ENCODE measurements at regions of chr3 and their contacts with region 1.

Region 1: GRCh38 chr3:18444595-18445400 is 19.7 kb upstream of the SATB1 start:
- DNase-seq: peak; percentile 94
- H3K4me3 ChIP-seq: peak overlapping the region; percentile 39 to 61
- H3K27ac ChIP-seq: no peak overlapping the region
- H3K4me1 ChIP-seq: peaks cover 0 to 17% of the 10 kb centered on the region in 2 experiments; a peak in 2 of 4 replicates
- H3K27me3 ChIP-seq: peaks cover 28% of the 10 kb centered on the region; the same call in 1 of the 2 replicates
- CTCF ChIP-seq: no peak
- EP300 ChIP-seq: no peak
- RAD21 ChIP-seq: peak; percentile 23; the same call in 1 of the 2 replicates

Region 2: GRCh38 chr3:18431266-18431665 is 13.5 kb before region 1 on chr3:
- CTCF ChIA-PET with region 1: interaction called, 13 read pairs
- POLR2A ChIA-PET with region 1: no interaction called
- DNase-seq: no peak
- H3K4me3 ChIP-seq: no peak overlapping the region
- H3K27ac ChIP-seq: no peak overlapping the region
- H3K4me1 ChIP-seq: peaks cover 0 to 2% of the 10 kb centered on the region in 2 experiments; a peak in 1 of 4 replicates
- H3K27me3 ChIP-seq: no peaks in the 10 kb centered on the region
- CTCF ChIP-seq: no peak
- EP300 ChIP-seq: no peak
- RAD21 ChIP-seq: no peak